IMR-90 (cell line): ENCODE measurements at regions of chr5 and their contacts with region 1.

Region 1: DNA sequence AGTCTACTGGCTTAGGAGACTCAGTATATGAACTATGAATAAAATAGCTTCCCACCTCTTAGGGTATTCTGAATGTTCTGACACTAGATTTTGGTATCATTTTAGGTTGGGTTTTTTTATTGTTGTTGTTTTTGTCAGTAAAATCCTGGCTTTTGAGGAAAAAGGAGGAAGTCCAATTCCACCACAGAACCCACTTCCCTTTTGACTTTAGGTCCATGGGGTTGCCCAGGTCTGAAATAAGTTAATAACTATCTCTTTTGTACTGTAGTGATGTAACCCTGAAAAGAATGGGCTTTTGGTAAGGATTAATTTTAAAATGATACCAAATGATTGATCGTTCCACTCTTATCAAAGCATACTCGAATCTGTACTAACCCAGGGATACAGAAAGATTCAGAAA is 29.1 kb upstream of the IL12B start:
- DNase-seq: no peak
- ATAC-seq: no peak
- H3K4me3 ChIP-seq: no peak overlapping the region
- H3K27ac ChIP-seq: no peak overlapping the region
- H3K4me1 ChIP-seq: no peaks in the 10 kb centered on the region
- H3K27me3 ChIP-seq: no peaks in the 10 kb centered on the region
- CTCF ChIP-seq: no peak
- POLR2A ChIP-seq: no peak
- RAD21 ChIP-seq: no peak

Region 2: GRCh38 chr5:161095953-161096352 is 1736.5 kb after region 1 on chr5:
- CTCF ChIA-PET with region 1: no interaction called
- POLR2A ChIA-PET with region 1: no interaction called
- dilution Hi-C with region 1: no loop called
- in situ Hi-C with region 1: no loop called
- intact Hi-C with region 1: loop called (anchors 5 kb)
- DNase-seq: no peak
- ATAC-seq: no peak
- H3K4me3 ChIP-seq: no peak overlapping the region
- H3K27ac ChIP-seq: no peak overlapping the region
- H3K4me1 ChIP-seq: no peaks in the 10 kb centered on the region
- H3K27me3 ChIP-seq: no peaks in the 10 kb centered on the region
- CTCF ChIP-seq: no peak
- POLR2A ChIP-seq: no peak
- RAD21 ChIP-seq: no peak